A673 (cell line): ENCODE measurements at regions of chr7 and their contacts with region 1.

Region 1: GRCh38 chr7:144416341-144416740 is 12.8 kb upstream of the NOBOX start:
- DNase-seq: no peak
- H3K4me3 ChIP-seq: no peak overlapping the region
- H3K27ac ChIP-seq: no peak overlapping the region
- H3K4me1 ChIP-seq: no peaks in the 10 kb centered on the region
- H3K27me3 ChIP-seq: no peaks in the 10 kb centered on the region
- CTCF ChIP-seq: no peak

Region 2: GRCh38 chr7:144399946-144400345 is 16.4 kb before region 1 on chr7:
- CTCF ChIA-PET with region 1: no interaction called
- POLR2A ChIA-PET with region 1: no interaction called
- intact Hi-C with region 1: loop called (anchors 2 kb)
- DNase-seq: no peak
- H3K4me3 ChIP-seq: no peak overlapping the region
- H3K27ac ChIP-seq: no peak overlapping the region
- H3K4me1 ChIP-seq: no peaks in the 10 kb centered on the region
- H3K27me3 ChIP-seq: no peaks in the 10 kb centered on the region
- CTCF ChIP-seq: no peak